ENCODE measurements at regions of chr11 and their contacts with region 1.

Region 1: DNA sequence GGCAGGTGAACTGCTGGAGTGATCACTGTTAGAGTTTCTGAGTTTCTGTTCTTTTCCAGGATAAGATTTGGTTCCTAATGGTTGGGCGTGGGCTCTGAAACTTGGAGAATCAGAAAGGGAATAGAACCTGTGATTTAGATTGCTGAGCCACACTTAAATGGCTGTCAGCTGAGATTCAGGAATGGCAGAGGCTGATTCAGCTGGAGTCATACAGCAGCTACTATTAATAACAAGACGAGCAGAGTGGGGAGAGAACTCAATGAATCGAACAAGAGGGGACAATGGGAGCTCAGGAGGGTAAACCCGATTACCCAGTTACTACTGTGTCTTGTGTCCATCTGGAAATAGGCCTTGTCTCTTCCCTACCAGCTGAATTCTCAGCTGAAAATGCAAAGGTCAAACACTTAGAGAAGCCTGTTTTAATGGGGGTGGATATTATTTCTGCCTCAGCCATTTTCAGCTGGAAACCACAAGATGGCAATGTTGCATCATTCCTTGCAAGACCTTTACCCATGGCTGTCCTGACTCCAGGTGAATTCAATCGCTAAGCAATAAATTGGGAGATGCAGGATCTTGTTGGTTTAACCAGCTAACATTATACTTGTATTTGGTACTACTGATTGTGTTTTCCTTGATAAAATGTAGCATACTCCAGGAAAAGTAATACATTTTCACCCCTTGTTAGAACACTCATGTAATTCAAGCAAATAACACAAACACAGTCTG is 104.5 kb upstream of the RAG2 start:
- DNase-seq: no peak
- ATAC-seq: peak; percentile 87

Region 2: DNA sequence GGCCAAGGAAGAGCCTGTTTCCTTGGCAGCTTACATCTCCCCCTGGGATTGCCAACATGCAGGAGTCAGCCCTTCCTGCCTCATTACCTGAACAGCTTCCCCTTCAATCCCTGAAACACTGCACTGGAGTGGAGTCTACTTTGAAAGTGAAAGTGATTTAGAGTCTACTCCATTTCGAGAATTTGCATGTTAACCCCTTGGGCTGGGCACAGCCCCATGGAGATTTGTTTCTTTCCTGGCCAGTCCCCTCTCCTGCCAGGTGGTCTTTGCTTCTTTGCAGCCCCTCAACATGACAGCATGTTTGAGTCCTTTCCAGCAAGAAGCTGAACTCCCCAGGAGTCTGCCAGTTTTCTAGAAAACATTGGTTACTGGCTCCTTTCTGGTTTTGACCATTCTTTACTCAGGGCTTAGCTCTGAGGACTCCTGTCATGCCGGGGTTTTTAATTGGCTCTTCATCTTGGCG is 252.4 kb before region 1 on chr11:
- intact Hi-C with region 1: no loop called
- DNase-seq: no peak
- ATAC-seq: no peak

Region 3: DNA sequence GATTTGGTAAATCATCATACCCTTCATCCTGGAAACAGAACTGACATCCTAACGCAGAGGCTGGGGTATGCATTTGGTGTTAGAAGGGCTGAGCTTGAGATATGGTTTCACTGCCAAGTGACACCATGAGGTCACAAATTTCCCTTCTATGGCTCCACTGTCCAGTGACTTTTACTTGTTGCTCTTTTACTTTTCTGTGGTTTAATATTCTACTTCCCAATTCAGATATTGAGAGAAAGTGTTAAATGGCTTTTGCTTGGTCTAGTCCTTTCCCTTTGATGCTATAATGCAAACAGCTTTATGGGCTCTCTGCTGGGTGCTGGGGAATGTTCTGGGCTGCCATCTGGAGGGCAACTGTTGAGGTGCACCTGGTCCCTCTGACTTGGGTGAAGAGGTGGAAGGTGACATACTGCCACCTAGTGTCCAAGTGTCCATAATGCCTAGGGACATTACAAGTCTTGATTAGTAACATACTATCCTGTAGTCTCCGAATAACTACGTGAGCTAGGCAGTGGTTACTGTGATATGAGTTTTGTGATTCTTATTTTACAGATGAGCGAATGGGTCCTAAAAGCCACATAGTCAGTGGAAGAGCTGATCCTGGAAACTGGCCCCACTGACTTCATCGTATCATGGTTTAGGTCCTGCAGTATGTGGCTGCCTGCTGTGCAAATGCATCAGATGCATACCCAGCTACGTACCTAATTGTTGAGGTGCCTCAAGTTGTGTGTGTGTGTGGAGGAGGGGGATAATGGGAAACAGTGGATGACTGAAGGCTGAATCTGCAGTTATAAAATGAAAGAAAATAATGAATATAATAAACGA is 44.6 kb after region 1 on chr11:
- intact Hi-C with region 1: loop called (anchors 1 kb)
- DNase-seq: peak; percentile 82
- ATAC-seq: peak; percentile 95